Activated T-helper 1 cell treated with anti-CD3 and anti-CD28 coated beads, Interleukin-12 subunit alpha, Interleukin-12 subunit beta, Interleukin-2, Interleukin-4 antibody, amounts not matched to agents 30 ng/mL and 10 ng/mL and 1 ng/mL, durations not matched to agents 14 hours and 24 hours and 36 hours (primary cell): ENCODE measurements at regions of chrX and their contacts with region 1.

Region 1: DNA sequence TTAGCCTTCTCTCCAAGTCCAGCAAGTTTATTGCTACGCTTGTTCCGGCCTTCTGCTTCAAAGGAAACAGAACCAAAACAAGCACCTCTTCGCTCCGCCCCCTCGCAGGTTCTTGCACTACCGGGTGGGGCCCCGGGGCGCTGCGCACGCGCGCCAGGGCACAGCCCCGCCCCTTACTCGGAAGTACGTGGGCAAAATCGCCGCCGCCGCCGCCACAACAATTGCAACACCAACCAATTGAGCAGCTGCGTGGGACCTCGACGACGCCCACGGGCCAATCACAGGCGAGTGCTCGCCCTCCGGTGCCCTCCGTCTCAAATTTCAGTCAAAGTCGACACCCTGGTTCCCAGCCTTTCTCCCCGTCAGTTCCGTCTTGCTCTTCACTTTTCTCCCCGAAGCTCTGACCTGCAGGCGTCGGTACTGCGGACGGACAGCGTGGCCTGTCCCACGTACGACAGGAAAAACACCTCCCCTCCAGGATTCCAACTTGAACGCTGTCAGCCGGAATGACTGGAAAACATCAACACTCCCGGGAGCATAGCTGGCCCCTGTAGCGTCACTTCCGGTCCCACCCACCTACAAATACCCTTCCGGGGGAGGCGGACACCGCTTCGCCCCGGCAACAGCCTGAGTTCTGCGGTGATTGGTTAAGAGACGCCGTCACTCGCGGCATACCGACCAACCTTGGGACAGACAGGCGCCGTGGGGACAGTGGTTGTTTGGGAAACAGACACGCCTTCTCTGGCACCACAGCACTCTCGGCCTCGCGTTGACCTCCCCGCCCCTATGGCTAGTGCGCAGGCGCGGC is 624 bp upstream of the OTUD5 start:
- DNase-seq: peak; percentile 90
- H3K4me3 Mint-ChIP-seq: peak overlapping the region; percentile 98
- H3K27ac Mint-ChIP-seq: peak overlapping the region; percentile 100
- H3K4me1 Mint-ChIP-seq: peaks cover 33% of the 10 kb centered on the region
- H3K27me3 Mint-ChIP-seq: no peaks in the 10 kb centered on the region

Region 2: GRCh38 chrX:48676106-48676892 is 281.7 kb before region 1 on chrX:
- intact Hi-C with region 1: loop called (anchors 1 kb)
- DNase-seq: peak; percentile 87
- H3K4me3 Mint-ChIP-seq: peak overlapping the region; percentile 86
- H3K27ac Mint-ChIP-seq: peak overlapping the region; percentile 88
- H3K4me1 Mint-ChIP-seq: peaks cover 20% of the 10 kb centered on the region
- H3K27me3 Mint-ChIP-seq: no peaks in the 10 kb centered on the region

Region 3: GRCh38 chrX:48937054-48937907 is 20.8 kb before region 1 on chrX:
- intact Hi-C with region 1: loop called (anchors 1 kb)
- DNase-seq: peak; percentile 85
- H3K4me3 Mint-ChIP-seq: peak overlapping the region; percentile 87
- H3K27ac Mint-ChIP-seq: peak overlapping the region; percentile 97
- H3K4me1 Mint-ChIP-seq: peaks cover 80% of the 10 kb centered on the region
- H3K27me3 Mint-ChIP-seq: no peaks in the 10 kb centered on the region

Region 4: GRCh38 chrX:49002091-49002935 is 44.3 kb after region 1 on chrX and contains the start of gene GRIPAP1:
- intact Hi-C with region 1: loop called (anchors 1 kb)
- DNase-seq: peak; percentile 68
- H3K4me3 Mint-ChIP-seq: peak within 1 kb of the TSS; percentile 99
- H3K27ac Mint-ChIP-seq: peak within 1 kb of the TSS; percentile 96
- H3K4me1 Mint-ChIP-seq: peaks cover 35% of the 10 kb centered on the region
- H3K27me3 Mint-ChIP-seq: no peaks in the 10 kb centered on the region
- total RNA-seq, gene GRIPAP1: 85.8 and 89.2 TPM in 2 replicates